ENCODE measurements at regions of chr21 and their contacts with region 1.

Region 1: DNA sequence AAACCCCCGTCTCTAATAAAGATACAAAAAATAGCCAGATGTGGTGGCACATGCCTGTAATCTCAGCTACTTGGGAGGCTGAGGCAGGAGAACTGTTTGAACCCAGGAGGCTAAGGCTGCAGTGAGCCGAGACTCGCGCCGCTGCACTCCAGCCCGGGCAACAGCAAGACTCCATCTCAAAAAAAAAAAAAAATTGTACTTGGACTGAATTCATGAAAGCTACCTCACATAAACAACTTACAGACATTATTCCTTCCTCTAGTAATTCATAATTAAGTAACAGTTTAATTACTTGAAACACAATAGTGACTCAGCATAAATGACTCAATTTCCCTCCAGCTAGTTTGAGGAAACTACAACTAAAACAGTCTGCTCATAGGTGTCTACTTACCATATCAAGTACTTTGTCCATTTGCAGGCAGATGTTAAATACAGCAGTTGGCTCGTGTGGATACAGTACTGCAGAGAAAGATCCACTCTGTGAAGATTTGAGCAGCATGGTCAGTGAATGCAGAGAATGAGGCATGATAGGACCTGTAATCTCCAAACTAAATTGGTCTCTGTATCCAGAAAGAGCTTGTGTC is 9.4 kb downstream of the DONSON start:
- DNase-seq: no peak

Region 2: GRCh38 chr21:33542640-33543504 is 36.2 kb before region 1 on chr21 and contains the start of gene SON:
- intact Hi-C with region 1: loop called in 1 of 2 experiments (anchors 1 kb)
- DNase-seq: peak; percentile 99
- total RNA-seq, gene SON: 220 to 221 TPM